ENCODE measurements at regions of chr12 and their contacts with region 1.

Region 1: GRCh38 chr12:110199339-110200123 is 75.4 kb downstream of the IFT81 start:
- DNase-seq: no peak
- ATAC-seq: no peak

Region 2: DNA sequence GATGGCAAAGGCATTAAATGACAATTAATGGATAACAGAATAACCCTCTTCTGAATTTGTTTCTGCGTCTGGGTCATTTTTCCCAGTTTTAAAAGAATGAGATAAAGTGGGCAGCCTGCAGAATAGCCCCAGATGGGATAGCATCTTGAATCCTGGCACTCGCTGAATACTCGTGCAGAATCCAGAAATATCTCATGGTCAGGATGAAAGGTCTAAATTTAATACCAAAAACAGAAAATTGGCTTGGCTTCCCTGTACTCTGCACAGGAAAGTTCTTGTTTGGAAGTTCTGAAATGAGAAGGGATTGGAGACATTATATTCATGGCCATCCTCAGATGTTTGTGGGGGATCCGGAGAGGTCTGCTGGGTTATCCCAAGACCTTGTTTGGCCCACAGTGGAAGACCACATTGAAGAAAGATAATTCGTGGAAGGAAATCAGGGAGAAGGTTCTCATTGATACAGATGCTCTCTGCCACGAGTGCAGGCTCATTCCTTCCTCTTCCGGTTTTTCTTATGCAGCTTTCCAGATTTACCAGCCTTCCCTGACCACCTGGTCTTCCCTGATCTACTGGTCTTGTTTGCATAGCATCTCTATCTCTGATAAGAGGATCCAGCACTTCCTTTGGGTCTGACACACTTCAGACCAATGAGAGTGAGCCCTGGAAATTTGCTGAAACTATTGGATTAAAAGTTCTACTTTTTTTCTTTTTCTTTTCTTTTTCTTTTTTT is 81.4 kb before region 1 on chr12:
- intact Hi-C with region 1: no loop called
- DNase-seq: no peak
- ATAC-seq: peak; percentile 24

Region 3: GRCh38 chr12:110141389-110141788 is 58.1 kb before region 1 on chr12:
- intact Hi-C with region 1: loop called (anchors 5 kb)
- DNase-seq: peak; percentile 66
- ATAC-seq: peak; percentile 91